ENCODE measurements at regions of chr14 and their contacts with region 1.

Region 1: DNA sequence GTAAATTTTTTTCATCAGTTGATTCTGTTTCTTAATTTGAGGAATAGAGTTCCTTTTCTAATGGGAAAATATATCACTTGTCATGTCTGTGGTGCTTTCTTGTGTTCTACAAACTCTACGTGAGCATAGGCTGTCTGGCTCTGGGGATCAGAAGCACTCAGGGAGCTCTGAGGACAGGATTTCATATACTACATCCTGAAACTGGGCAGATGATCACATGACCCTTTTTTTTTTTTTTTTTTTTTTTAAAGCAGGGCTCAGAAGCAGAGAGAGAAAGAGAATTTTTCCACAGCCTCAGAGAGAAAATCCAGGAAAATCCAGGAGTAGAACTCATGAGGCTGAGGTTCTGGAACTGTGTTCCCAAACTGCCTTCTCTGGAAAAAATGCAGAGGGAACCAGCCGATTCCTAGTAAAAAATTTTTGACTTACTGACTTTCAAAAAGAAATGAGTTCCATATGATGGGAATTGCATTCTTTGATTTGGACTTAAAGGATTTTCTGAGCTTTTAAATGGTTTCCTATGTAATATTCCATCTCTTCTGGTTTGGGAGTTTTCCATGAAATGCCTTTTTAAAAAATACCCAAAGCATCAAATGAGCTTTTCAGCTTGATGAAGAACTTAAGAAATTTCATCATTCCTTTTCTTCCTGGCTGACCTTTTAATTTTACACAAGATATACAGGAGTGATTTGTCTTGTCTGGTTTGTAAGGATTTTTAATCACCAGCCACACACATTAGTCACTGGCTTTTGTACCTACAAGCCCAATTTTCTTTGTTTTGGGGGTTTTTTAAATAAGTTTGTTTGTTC is 183.1 kb upstream of the HIF1A start:
- DNase-seq: peak; percentile 46
- H3K4me3 Mint-ChIP-seq: peak overlapping the region; percentile 56
- H3K27ac Mint-ChIP-seq: peak overlapping the region; percentile 100
- H3K4me1 Mint-ChIP-seq: peaks cover 95% of the 10 kb centered on the region
- H3K27me3 Mint-ChIP-seq: no peaks in the 10 kb centered on the region

Region 2: GRCh38 chr14:61525293-61526011 is 13.2 kb after region 1 on chr14:
- CTCF ChIA-PET with region 1: interaction called, 8 read pairs
- intact Hi-C with region 1: loop called (anchors 1 kb)
- DNase-seq: peak; percentile 91
- H3K4me3 Mint-ChIP-seq: peak overlapping the region; percentile 22
- H3K27ac Mint-ChIP-seq: peak overlapping the region; percentile 94
- H3K4me1 Mint-ChIP-seq: peaks cover 84% of the 10 kb centered on the region
- H3K27me3 Mint-ChIP-seq: no peaks in the 10 kb centered on the region

Region 3: DNA sequence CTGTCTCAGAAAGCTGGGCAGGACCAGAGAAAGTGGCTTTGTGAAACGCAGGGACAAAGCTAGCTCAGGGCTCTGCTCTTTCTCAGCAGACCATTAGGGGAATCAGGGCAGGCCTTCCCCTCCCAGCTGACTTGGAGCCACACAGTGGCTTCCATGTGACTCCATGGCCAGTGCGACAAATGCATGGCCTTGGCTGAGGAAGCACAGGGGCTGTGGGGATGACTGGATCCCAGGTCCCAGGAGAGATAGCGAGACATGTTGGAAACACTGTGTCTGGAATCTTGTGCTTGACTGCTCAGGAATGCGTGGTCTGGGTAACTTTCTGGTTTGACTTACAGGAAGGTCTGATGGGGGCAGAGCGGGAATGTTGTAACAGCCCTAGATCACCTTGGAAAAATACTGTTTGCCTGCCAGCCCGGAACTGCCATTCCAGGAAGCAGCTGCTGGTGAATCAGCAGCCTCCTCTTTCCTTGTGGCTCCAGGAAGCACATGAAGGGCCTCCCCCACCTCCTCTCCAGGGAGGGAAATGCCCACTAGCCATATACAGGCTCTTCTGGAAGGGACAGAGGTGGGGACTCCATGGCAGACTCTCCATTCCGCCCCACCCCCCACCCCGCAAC is 49.5 kb after region 1 on chr14:
- CTCF ChIA-PET with region 1: no interaction called
- intact Hi-C with region 1: loop called (anchors 2 kb)
- DNase-seq: no peak
- H3K4me3 Mint-ChIP-seq: no peak overlapping the region
- H3K27ac Mint-ChIP-seq: peak overlapping the region; percentile 75
- H3K4me1 Mint-ChIP-seq: peaks cover 73% of the 10 kb centered on the region
- H3K27me3 Mint-ChIP-seq: no peaks in the 10 kb centered on the region

Region 4: GRCh38 chr14:61573748-61574513 is 61.7 kb after region 1 on chr14:
- CTCF ChIA-PET with region 1: no interaction called
- intact Hi-C with region 1: loop called (anchors 1 kb)
- DNase-seq: peak; percentile 65
- H3K4me3 Mint-ChIP-seq: no peak overlapping the region
- H3K27ac Mint-ChIP-seq: peak overlapping the region; percentile 74
- H3K4me1 Mint-ChIP-seq: peaks cover 78% of the 10 kb centered on the region
- H3K27me3 Mint-ChIP-seq: no peaks in the 10 kb centered on the region

Region 5: GRCh38 chr14:61653507-61653906 is 141.3 kb after region 1 on chr14:
- CTCF ChIA-PET with region 1: no interaction called
- intact Hi-C with region 1: no loop called
- DNase-seq: no peak
- H3K4me3 Mint-ChIP-seq: no peak overlapping the region
- H3K27ac Mint-ChIP-seq: no peak overlapping the region
- H3K4me1 Mint-ChIP-seq: peaks cover 29% of the 10 kb centered on the region
- H3K27me3 Mint-ChIP-seq: no peaks in the 10 kb centered on the region

Region 6: DNA sequence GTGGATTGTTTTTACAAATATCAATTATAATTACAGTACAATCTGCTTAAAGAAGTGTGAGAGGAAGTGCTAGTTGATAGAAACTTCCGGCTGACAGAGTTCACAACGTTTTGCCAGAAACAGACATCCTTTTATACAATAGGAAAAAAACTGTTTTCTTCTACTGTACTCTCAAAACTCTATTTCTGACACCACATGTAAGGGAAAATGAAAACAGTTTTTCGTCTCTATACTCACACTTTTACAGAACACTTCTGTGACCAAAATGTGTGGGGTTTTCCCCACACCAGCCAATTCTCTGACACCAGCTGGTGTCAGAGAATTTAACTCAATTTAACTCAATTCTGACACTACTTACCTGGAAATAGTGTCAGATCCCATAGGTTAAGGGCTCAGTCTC is 158.9 kb after region 1 on chr14:
- CTCF ChIA-PET with region 1: no interaction called
- intact Hi-C with region 1: loop called (anchors 1 kb)
- DNase-seq: peak; percentile 69
- H3K4me3 Mint-ChIP-seq: peak overlapping the region; percentile 35
- H3K27ac Mint-ChIP-seq: no peak overlapping the region
- H3K4me1 Mint-ChIP-seq: peaks cover 25% of the 10 kb centered on the region
- H3K27me3 Mint-ChIP-seq: no peaks in the 10 kb centered on the region

Measured in activated naive CD4-positive, alpha-beta T cell treated with anti-CD3 and anti-CD28 coated beads for 36 hours (primary cell).